ENCODE measurements at regions of chr2 and their contacts with region 1.

Region 1: DNA sequence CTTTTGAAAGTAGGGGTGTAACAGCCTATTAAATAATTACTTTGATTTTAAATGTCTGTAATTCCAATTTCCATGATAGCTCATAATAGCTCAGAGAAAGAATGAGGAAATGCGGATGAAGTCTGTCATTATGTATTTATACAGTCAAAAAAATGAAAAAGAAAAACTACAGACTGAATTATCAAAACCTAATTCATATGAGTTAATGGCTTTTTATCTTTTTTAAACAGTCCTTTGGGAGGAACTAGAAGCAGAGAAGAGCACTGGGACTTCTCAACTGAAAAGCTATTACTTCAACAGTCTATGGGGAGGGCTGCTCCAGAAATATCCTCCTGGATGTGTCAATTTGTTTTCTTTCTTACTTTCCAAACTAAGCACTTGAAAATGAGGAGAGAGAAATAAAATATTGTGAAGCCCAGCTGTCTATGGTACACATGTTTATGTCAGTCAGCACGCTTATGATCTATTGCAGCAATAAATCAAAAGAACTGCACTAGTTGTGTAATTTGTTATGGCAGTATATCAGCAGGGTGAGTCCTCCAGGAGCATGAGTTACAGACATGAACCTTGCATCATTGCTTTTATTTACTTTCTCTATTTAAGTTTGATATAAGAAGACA is 1550.2 kb downstream of the LRP1B start:
- DNase-seq: no peak
- ATAC-seq: no peak
- H3K4me3 ChIP-seq: no peak overlapping the region
- H3K27ac ChIP-seq: no peak overlapping the region
- H3K4me1 ChIP-seq: no peaks in the 10 kb centered on the region
- H3K27me3 ChIP-seq: no peaks in the 10 kb centered on the region
- CTCF ChIP-seq: no peak

Region 2: GRCh38 chr2:140275427-140275826 is 305.2 kb before region 1 on chr2:
- intact Hi-C with region 1: loop called in 1 of 10 experiments (anchors 5 kb)
- DNase-seq: no peak
- ATAC-seq: no peak
- H3K4me3 ChIP-seq: no peak overlapping the region
- H3K27ac ChIP-seq: no peak overlapping the region
- H3K4me1 ChIP-seq: no peaks in the 10 kb centered on the region
- H3K27me3 ChIP-seq: no peaks in the 10 kb centered on the region
- CTCF ChIP-seq: no peak

Region 3: GRCh38 chr2:140593159-140593558 is 12.5 kb after region 1 on chr2:
- intact Hi-C with region 1: loop called in 1 of 10 experiments (anchors 2 kb)
- DNase-seq: no peak
- ATAC-seq: no peak
- H3K4me3 ChIP-seq: no peak overlapping the region
- H3K27ac ChIP-seq: no peak overlapping the region
- H3K4me1 ChIP-seq: no peaks in the 10 kb centered on the region
- H3K27me3 ChIP-seq: no peaks in the 10 kb centered on the region
- CTCF ChIP-seq: no peak

Measured in heart right ventricle (tissue), 16 donors.